ENCODE measurements at regions of chr7 and their contacts with region 1.

Region 1: GRCh38 chr7:114889646-114890285 is 32.1 kb upstream of the MDFIC start:
- DNase-seq: no peak
- H3K4me3 Mint-ChIP-seq: peak overlapping the region; percentile 10
- H3K27ac Mint-ChIP-seq: peak overlapping the region; percentile 83
- H3K4me1 Mint-ChIP-seq: peaks cover 31% of the 10 kb centered on the region
- H3K27me3 Mint-ChIP-seq: no peaks in the 10 kb centered on the region

Region 2: DNA sequence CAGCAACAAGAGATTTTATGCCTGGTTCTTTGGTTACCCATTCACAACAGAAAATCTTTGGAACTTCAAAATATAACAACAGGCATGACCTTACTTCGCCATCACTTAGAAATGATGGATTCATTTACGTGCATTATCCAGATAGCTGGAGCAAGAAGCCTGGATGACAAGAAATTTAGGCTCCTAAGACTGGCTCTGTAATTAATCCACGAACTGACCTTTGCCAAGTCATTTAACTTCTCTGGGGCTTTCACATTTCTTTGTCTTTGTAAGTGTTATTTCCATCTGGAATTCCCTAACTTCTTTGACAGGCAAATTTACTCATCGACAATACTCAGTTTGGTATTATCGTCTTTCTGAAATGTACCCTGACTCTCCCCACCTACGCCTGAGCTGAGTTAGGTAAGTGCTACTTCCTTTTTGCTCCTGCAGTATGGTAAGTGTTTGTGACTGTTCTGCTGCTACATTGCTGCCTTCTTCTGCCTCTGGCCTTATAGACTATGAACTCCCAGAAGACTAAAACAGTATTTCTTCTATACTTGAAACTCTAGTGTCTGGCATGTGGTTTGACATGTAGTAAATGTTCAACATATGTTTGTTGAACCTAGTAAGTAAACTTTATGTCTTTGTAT is 26.6 kb after region 1 on chr7:
- CTCF ChIA-PET with region 1: no interaction called
- POLR2A ChIA-PET with region 1: interaction called, 4 read pairs
- intact Hi-C with region 1: loop called (anchors 1 kb)
- DNase-seq: peak; percentile 69
- H3K4me3 Mint-ChIP-seq: peak overlapping the region; percentile 38
- H3K27ac Mint-ChIP-seq: peak overlapping the region; percentile 90
- H3K4me1 Mint-ChIP-seq: peaks cover 57% of the 10 kb centered on the region
- H3K27me3 Mint-ChIP-seq: no peaks in the 10 kb centered on the region

Region 3: DNA sequence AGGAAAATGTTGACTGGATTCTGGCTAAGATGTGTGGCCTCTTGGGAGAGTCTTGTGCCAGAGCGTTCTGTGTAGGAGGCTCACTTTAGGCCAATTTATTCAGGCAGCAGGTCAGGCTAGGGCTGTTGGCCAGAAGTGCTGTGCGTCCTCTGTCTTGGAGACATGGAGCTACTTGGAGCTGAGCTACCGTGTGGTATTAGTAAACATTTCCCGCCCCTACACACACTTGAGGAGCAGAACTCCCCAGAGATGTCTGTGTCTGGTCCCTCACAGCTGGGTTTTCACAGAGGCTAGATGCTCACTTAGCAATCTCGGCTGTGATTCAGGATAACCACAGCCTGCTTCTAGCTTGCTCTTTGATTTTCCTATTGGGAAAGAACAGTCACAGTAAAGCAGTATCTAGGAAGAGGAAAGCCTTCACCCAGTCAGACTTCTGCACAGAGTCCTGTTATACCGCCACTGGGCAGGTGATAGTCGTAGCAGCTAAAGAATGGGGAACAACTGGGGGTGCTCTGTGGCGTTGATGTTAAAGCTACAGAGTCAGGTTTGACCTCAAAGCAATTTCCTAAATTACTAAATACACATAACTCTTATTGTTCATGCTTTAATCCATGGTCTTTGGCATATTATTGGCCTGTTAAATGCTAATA is 118.8 kb after region 1 on chr7:
- CTCF ChIA-PET with region 1: no interaction called
- POLR2A ChIA-PET with region 1: no interaction called
- intact Hi-C with region 1: loop called (anchors 5 kb)
- DNase-seq: peak; percentile 28
- H3K4me3 Mint-ChIP-seq: peak overlapping the region; percentile 58
- H3K27ac Mint-ChIP-seq: peak overlapping the region; percentile 88
- H3K4me1 Mint-ChIP-seq: peaks cover 76% of the 10 kb centered on the region
- H3K27me3 Mint-ChIP-seq: no peaks in the 10 kb centered on the region

Measured in activated CD4-positive, alpha-beta memory T cell treated with anti-CD3 and anti-CD28 coated beads for 36 hours (primary cell).